Tibial artery (tissue), 4 donors: ENCODE measurements at regions of chr2 and their contacts with region 1.

Region 1: GRCh38 chr2:239991689-239992314 is 33.3 kb downstream of the NDUFA10 start:
- DNase-seq: no peak
- H3K4me3 ChIP-seq: no peak overlapping the region
- H3K27ac ChIP-seq: no peak overlapping the region
- H3K4me1 ChIP-seq: no peaks in the 10 kb centered on the region
- H3K27me3 ChIP-seq: no peaks in the 10 kb centered on the region
- CTCF ChIP-seq: peak; percentile 77 to 83

Region 2: DNA sequence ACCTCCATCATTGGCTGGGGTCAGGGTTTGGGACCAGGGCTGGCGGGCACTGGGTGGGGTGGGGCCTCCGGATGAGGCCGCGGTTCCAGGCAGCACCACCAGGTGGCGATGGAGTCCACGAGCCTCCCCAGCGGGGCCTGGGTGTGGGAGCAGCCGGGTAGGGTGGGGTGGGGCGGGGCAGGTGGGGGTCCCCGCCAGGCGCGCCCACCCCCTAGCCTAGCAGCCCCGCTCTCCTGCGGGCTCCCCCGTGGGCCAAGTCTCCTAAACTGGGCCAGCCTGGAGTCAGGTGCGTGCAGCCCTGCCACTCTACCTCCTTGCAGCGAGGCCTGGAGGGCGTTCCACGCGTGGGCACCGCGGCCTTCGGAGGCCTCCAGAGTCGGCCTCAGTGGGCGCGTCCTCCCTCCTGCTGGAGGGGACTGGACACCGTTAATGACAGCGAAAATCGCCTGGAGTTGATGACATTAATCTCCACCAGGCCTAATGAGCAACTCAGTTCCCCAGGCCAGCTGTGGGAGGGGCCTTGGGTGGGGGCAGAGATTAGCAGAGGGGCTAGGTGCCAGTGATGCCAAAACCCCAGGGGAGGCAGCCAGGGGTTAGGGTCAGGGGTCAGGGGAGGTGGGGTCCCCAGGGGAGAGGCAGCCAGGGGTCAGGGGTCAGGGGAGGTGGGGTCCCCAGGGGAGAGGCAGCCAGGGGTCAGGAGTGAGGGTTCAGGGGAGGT is 956.3 kb before region 1 on chr2:
- intact Hi-C with region 1: loop called (anchors 5 kb)
- DNase-seq: peak in 1 of 2 donors; percentile 70
- H3K4me3 ChIP-seq: no peak overlapping the region
- H3K27ac ChIP-seq: no peak overlapping the region
- H3K4me1 ChIP-seq: peaks cover 0 to 5% (median 0%) of the 10 kb centered on the region in 4 donors
- H3K27me3 ChIP-seq: peaks cover 0 to 5% of the 10 kb centered on the region in 2 donors
- CTCF ChIP-seq: peak; percentile 57 to 96

Region 3: GRCh38 chr2:239934571-239935171 is 57.1 kb before region 1 on chr2:
- intact Hi-C with region 1: loop called (anchors 2 kb)
- DNase-seq: peak; percentile 72 to 77
- H3K4me3 ChIP-seq: no peak overlapping the region
- H3K27ac ChIP-seq: no peak overlapping the region
- H3K4me1 ChIP-seq: peaks cover 0 to 4% (median 0%) of the 10 kb centered on the region in 4 donors
- H3K27me3 ChIP-seq: no peaks in the 10 kb centered on the region
- CTCF ChIP-seq: peak; percentile 73 to 76

Region 4: DNA sequence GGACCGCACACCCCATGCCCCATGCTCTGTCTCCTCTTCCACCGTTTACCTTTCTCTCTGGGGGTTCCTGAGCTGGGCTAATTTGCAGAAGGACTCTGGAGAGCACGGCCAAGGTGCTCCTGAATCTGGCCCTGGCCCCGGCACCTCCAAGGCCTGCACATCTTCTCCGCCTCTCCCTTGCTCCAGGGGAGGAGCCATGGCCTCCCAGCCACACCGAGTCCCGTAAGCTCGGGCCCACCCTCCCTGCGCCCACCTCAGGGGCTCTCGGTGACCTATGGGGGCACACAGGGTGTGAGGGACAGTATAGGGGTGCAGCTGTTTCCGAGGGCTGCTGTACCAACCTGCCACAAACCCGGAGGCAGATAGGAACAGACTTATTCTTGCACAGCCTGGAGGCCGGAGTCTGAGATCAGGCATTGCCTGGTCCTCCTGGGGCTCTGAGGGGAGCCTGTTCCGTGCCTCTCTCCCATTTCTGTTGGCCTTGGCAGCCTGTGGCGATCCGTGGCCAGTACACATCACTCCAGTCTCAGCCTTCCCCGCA is 316.4 kb after region 1 on chr2:
- intact Hi-C with region 1: no loop called
- DNase-seq: peak in 1 of 2 donors; percentile 50
- H3K4me3 ChIP-seq: no peak overlapping the region
- H3K27ac ChIP-seq: no peak overlapping the region
- H3K4me1 ChIP-seq: no peaks in the 10 kb centered on the region
- H3K27me3 ChIP-seq: no peaks in the 10 kb centered on the region
- CTCF ChIP-seq: no peak